Caco-2 (cell line): ENCODE measurements at regions of chr4 and their contacts with region 1.

Region 1: DNA sequence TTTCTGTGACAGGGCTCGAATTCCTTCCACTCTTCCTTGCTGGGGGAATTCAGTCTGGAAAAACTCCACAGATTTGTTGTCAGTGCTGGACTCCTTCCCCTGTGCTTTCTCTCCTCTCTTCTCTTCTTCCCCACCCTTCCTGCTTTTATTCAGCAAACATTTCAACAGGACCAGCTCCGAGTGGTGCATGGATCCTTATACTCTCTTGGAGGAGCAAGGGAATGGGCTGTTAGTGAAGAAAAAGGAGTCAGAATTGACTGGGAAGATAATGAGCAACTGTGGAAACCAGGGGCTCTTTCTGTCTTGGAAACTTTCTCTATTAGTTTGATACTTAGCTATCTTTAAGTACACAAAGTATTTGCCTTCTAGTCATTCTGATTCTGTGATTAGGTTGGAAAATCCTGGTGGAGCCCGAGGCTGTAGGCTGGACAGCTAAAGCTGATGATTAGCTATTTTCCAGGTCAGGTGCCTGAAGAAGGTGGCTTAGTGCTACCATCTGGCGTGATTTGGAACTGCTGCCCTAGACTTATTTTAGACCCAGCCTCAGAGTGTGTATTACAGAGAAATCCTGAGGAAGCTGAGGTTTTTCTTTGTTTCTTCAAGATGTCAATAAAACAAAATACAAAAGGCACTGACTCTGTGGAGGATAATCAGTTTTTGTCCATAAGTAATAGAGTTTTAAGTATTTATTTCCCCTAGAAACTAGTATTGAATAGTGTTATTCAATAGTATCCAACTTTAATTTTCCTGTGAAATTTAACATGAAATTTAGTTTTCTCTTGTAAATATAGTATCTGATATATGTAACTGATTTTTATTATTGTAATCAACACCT is 38.4 kb downstream of the NAP1L5 start:
- DNase-seq: peak; percentile 70 to 71
- H3K4me3 ChIP-seq: no peak overlapping the region
- H3K4me3 Mint-ChIP-seq: peak overlapping the region; percentile 20
- H3K27ac Mint-ChIP-seq: peak overlapping the region; percentile 6
- H3K4me1 ChIP-seq: peaks cover 34% of the 10 kb centered on the region
- H3K4me1 Mint-ChIP-seq: peaks cover 29% of the 10 kb centered on the region
- H3K27me3 ChIP-seq: no peaks in the 10 kb centered on the region
- H3K27me3 Mint-ChIP-seq: no peaks in the 10 kb centered on the region
- CTCF ChIP-seq: peak; percentile 70 to 71

Region 2: GRCh38 chr4:88523325-88524129 is 135.7 kb before region 1 on chr4 and contains the start of gene PYURF:
- CTCF ChIA-PET with region 1: interaction called, 25 read pairs
- POLR2A ChIA-PET with region 1: interaction called, 6 read pairs
- intact Hi-C with region 1: loop called (anchors 1 kb)
- DNase-seq: peak; percentile 93 to 95
- H3K4me3 ChIP-seq: peak within 1 kb of the TSS; percentile 56
- H3K4me3 Mint-ChIP-seq: peak within 1 kb of the TSS; percentile 93
- H3K27ac Mint-ChIP-seq: peak within 1 kb of the TSS; percentile 91
- H3K4me1 ChIP-seq: peaks cover 7% of the 10 kb centered on the region; the same call in 1 of the 2 replicates
- H3K4me1 Mint-ChIP-seq: peaks cover 7% of the 10 kb centered on the region
- H3K27me3 ChIP-seq: no peaks in the 10 kb centered on the region
- H3K27me3 Mint-ChIP-seq: no peaks in the 10 kb centered on the region
- CTCF ChIP-seq: no peak
- total RNA-seq, gene PYURF: 41.6 and 46.6 TPM in 2 replicates

Region 3: GRCh38 chr4:88533937-88534750 is 125.1 kb before region 1 on chr4:
- CTCF ChIA-PET with region 1: interaction called, 68 read pairs
- POLR2A ChIA-PET with region 1: interaction called, 4 read pairs
- intact Hi-C with region 1: loop called (anchors 1 kb)
- DNase-seq: no peak
- H3K4me3 ChIP-seq: no peak overlapping the region
- H3K4me3 Mint-ChIP-seq: no peak overlapping the region
- H3K27ac Mint-ChIP-seq: no peak overlapping the region
- H3K4me1 ChIP-seq: no peaks in the 10 kb centered on the region
- H3K4me1 Mint-ChIP-seq: no peaks in the 10 kb centered on the region
- H3K27me3 ChIP-seq: no peaks in the 10 kb centered on the region
- H3K27me3 Mint-ChIP-seq: no peaks in the 10 kb centered on the region
- CTCF ChIP-seq: no peak

Region 4: GRCh38 chr4:88591787-88592599 is 67.3 kb before region 1 on chr4 and contains the start of gene HERC3:
- CTCF ChIA-PET with region 1: interaction called, 13 read pairs
- POLR2A ChIA-PET with region 1: no interaction called
- intact Hi-C with region 1: loop called (anchors 1 kb)
- DNase-seq: peak; percentile 86 to 93
- H3K4me3 ChIP-seq: peak within 1 kb of the TSS; percentile 86
- H3K4me3 Mint-ChIP-seq: peak within 1 kb of the TSS; percentile 96
- H3K27ac Mint-ChIP-seq: peak within 1 kb of the TSS; percentile 71
- H3K4me1 ChIP-seq: peaks cover 13% of the 10 kb centered on the region
- H3K4me1 Mint-ChIP-seq: peaks cover 6% of the 10 kb centered on the region
- H3K27me3 ChIP-seq: no peaks in the 10 kb centered on the region
- H3K27me3 Mint-ChIP-seq: no peaks in the 10 kb centered on the region
- CTCF ChIP-seq: no peak
- total RNA-seq, gene HERC3: 9.2 and 10.5 TPM in 2 replicates

Region 5: GRCh38 chr4:88646528-88647280 is 12.6 kb before region 1 on chr4:
- CTCF ChIA-PET with region 1: interaction called, 11 read pairs
- POLR2A ChIA-PET with region 1: interaction called, 4 read pairs
- intact Hi-C with region 1: loop called (anchors 1 kb)
- DNase-seq: peak; percentile 56 to 63
- H3K4me3 ChIP-seq: no peak overlapping the region
- H3K4me3 Mint-ChIP-seq: peak overlapping the region; percentile 6
- H3K27ac Mint-ChIP-seq: peak overlapping the region; percentile 42
- H3K4me1 ChIP-seq: peaks cover 26% of the 10 kb centered on the region
- H3K4me1 Mint-ChIP-seq: peaks cover 26% of the 10 kb centered on the region
- H3K27me3 ChIP-seq: no peaks in the 10 kb centered on the region
- H3K27me3 Mint-ChIP-seq: no peaks in the 10 kb centered on the region
- CTCF ChIP-seq: no peak

Region 6: GRCh38 chr4:88720451-88721428 is 61.5 kb after region 1 on chr4:
- CTCF ChIA-PET with region 1: no interaction called
- POLR2A ChIA-PET with region 1: no interaction called
- intact Hi-C with region 1: no loop called
- DNase-seq: no peak
- H3K4me3 ChIP-seq: no peak overlapping the region
- H3K4me3 Mint-ChIP-seq: no peak overlapping the region
- H3K27ac Mint-ChIP-seq: no peak overlapping the region
- H3K4me1 ChIP-seq: no peaks in the 10 kb centered on the region
- H3K4me1 Mint-ChIP-seq: no peaks in the 10 kb centered on the region
- H3K27me3 ChIP-seq: no peaks in the 10 kb centered on the region
- H3K27me3 Mint-ChIP-seq: no peaks in the 10 kb centered on the region
- CTCF ChIP-seq: no peak